ENCODE measurements at regions of chr13 and their contacts with region 1.

Region 1: DNA sequence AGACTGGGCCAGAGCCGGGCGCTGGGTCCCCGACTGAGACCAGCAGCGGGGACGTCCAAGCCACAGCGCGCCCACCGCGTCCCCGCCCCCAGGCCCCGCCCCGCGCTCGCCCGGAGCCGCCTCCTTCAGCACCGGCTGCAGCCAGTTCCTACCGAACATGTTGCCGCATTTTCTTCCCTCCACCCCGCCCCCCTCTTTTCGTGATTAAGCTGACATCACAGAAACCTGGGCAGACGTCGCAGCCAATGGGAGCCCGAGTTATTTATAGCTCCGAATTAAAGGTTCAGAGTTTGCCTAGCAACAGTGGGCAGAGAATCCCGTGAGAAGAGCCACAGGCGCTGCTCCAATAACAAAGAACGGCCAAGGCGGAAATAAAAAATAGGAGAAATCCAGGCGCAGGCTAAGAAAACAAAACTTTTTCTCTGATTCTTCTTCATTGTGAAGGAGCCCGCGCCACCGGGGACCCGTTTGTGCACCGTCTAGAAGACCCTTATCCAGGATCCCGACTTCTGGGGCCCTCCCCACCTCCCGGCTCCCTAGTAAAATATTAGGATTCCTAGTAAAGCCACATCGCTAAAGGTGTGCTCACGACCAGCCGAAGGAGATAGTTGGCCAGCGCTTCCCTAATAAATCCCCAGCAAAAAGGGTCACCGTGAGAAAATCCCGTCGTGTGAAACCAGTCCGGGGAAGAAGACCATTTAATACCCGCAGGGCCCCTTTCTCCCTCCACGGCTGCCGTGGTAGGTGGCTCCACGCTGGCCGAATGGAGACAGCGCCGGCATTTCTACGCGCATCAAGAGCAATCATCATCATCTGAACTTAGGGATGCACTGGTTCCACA is 61.7 kb downstream of the SERP2 start:
- DNase-seq: peak; percentile 92 to 95
- ATAC-seq: peak; percentile 73 to 78 (median 75)
- H3K4me3 ChIP-seq: peak overlapping the region; percentile 73
- H3K27ac ChIP-seq: peak overlapping the region; percentile 92
- H3K4me1 ChIP-seq: peaks cover 22% of the 10 kb centered on the region
- H3K27me3 ChIP-seq: no peaks in the 10 kb centered on the region
- CTCF ChIP-seq: no peak

Region 2: DNA sequence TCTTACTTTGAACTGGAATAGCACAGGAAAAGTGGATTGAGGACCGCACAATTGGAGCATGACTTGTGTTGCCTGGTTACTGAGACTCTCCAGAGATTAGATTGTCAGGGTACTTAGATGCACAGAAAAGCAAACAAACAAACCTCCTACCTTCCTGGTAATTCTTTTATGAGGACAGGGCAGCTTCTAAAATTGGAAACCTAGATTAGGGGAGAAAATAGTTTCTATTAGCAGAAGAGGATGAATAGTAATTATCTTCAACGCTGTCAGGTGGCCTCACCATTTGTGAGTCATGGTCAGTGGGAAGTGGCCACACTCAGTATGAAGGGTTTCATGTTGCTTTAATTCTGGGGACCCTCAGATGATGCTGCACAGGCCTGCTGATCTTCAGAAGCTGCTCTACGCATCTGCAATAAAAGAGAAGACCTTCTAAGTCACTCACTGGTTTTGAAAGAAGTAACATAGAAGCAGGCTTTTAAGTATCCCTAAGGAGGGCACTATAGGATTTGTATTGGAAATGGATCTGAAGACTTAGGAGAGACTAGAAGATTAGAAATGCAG is 448.9 kb before region 1 on chr13:
- intact Hi-C with region 1: no loop called
- DNase-seq: no peak
- ATAC-seq: no peak
- H3K4me3 ChIP-seq: no peak overlapping the region
- H3K27ac ChIP-seq: no peak overlapping the region
- H3K4me1 ChIP-seq: no peaks in the 10 kb centered on the region
- H3K27me3 ChIP-seq: no peaks in the 10 kb centered on the region
- CTCF ChIP-seq: no peak

Region 3: GRCh38 chr13:44050450-44051063 is 384.8 kb before region 1 on chr13:
- intact Hi-C with region 1: loop called (anchors 2 to 5 kb)
- DNase-seq: no peak
- ATAC-seq: peak in 3 of 4 donors; percentile 44 to 80 (median 75)
- H3K4me3 ChIP-seq: no peak overlapping the region
- H3K27ac ChIP-seq: no peak overlapping the region
- H3K4me1 ChIP-seq: peaks cover 3% of the 10 kb centered on the region
- H3K27me3 ChIP-seq: no peaks in the 10 kb centered on the region
- CTCF ChIP-seq: peak; percentile 85

Region 4: GRCh38 chr13:44191504-44192171 is 243.7 kb before region 1 on chr13:
- intact Hi-C with region 1: loop called (anchors 2 to 5 kb)
- DNase-seq: peak in 1 of 2 donors; percentile 22
- ATAC-seq: peak; percentile 93 to 98 (median 97)
- H3K4me3 ChIP-seq: peak overlapping the region; percentile 53
- H3K27ac ChIP-seq: peak overlapping the region; percentile 56
- H3K4me1 ChIP-seq: peaks cover 8% of the 10 kb centered on the region
- H3K27me3 ChIP-seq: no peaks in the 10 kb centered on the region
- CTCF ChIP-seq: peak; percentile 84

Region 5: DNA sequence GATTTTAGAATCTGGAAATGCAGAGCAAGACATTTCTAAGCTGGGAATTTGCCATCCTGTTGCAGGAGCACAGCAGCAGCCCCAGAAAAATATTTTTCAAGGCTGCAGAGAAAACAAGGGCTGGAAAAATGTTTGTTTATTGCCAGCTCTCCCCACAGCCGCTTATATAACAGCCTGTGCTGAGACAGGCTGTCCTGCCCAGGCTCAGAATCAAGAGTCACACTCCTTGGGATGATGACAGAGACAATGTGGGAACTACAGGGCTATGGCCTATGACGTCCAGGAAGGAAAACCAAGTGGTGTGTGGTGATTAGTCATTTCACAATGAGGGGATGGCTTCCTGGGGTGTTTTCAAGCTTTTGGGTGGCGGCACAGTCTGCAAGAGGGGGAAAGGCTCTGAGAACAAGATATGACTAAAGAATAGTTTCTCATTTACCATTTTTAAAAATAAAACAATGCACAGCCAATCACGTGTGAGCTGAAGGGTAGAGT is 198.0 kb before region 1 on chr13:
- intact Hi-C with region 1: loop called in 1 of 2 experiments (anchors 2 kb)
- DNase-seq: peak; percentile 56 to 78
- ATAC-seq: peak; percentile 88 to 95 (median 92)
- H3K4me3 ChIP-seq: no peak overlapping the region
- H3K27ac ChIP-seq: peak overlapping the region; percentile 92
- H3K4me1 ChIP-seq: peaks cover 44% of the 10 kb centered on the region
- H3K27me3 ChIP-seq: no peaks in the 10 kb centered on the region
- CTCF ChIP-seq: no peak

Region 6: GRCh38 chr13:44312898-44313551 is 122.3 kb before region 1 on chr13:
- intact Hi-C with region 1: loop called (anchors 5 to 10 kb)
- DNase-seq: no peak
- ATAC-seq: no peak
- H3K4me3 ChIP-seq: no peak overlapping the region
- H3K27ac ChIP-seq: no peak overlapping the region
- H3K4me1 ChIP-seq: peaks cover 17% of the 10 kb centered on the region
- H3K27me3 ChIP-seq: no peaks in the 10 kb centered on the region
- CTCF ChIP-seq: no peak

Measured in psoas muscle (tissue), 8 donors.